ENCODE measurements at regions of chr12 and their contacts with region 1.

Region 1: DNA sequence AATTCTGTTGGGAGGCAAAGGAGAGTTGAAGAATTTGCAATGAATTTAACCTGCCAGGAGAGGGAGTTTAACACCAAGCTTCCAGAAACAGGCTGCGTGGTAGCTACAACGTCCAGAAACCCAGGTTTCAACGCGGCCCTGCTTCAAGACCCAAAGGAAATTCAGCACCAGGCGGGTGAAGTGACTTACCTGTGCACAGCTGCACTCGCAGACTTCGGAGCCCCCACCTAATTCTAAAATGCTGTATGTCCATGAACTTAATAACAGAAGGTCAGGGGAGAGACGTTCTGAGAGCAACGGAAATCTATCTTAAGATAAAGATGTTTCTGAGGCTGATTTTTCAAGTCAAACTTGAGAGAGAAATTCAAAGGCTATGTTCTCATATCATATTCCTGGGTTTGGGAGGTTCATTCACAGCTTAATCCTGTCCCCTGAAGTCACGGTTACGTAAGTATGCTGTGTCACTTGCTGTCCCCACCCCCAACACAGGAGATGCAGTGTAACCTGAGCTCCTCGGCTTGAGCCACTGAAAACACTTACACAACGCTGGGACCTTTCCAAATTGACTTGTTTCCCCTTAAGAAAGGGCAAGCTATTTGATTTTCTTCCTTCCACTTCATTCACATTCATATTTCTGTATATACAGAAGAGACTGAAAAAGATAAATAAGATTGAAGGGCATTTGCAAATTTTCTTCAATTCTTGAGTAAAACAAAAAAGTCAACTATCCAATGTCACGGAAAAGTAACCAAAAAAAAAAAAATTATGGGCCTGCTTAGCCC is 22.7 kb downstream of the CLIP1 start:
- DNase-seq: peak; percentile 75
- H3K4me3 ChIP-seq: peak overlapping the region; percentile 2 to 27 (median 18)
- H3K27ac ChIP-seq: peak overlapping the region; percentile 97
- H3K4me1 ChIP-seq: peaks cover 34% of the 10 kb centered on the region
- H3K27me3 ChIP-seq: no peaks in the 10 kb centered on the region
- CTCF ChIP-seq: peak; percentile 58 to 70

Region 2: GRCh38 chr12:122421821-122422729 is 22.3 kb after region 1 on chr12 and contains the start of gene CLIP1:
- CTCF ChIA-PET with region 1: no interaction called
- dilution Hi-C with region 1: no loop called
- in situ Hi-C with region 1: no loop called
- intact Hi-C with region 1: loop called (anchors 1 kb)
- DNase-seq: peak; percentile 68
- H3K4me3 ChIP-seq: peak within 1 kb of the TSS; percentile 70 to 79 (median 75)
- H3K27ac ChIP-seq: peak within 1 kb of the TSS; percentile 95
- H3K4me1 ChIP-seq: peaks cover 21% of the 10 kb centered on the region
- H3K27me3 ChIP-seq: no peaks in the 10 kb centered on the region
- CTCF ChIP-seq: peak in 1 of 2 donors; percentile 56
- total RNA-seq, gene CLIP1: 86.1 to 97.4 TPM

Region 3: GRCh38 chr12:122437656-122438121 is 37.9 kb after region 1 on chr12:
- CTCF ChIA-PET with region 1: no interaction called
- dilution Hi-C with region 1: loop called (anchors 5 kb)
- in situ Hi-C with region 1: no loop called
- intact Hi-C with region 1: no loop called
- DNase-seq: peak; percentile 74
- H3K4me3 ChIP-seq: peak overlapping the region in 1 of 3 experiments; percentile 3
- H3K27ac ChIP-seq: no peak overlapping the region
- H3K4me1 ChIP-seq: peaks cover 4% of the 10 kb centered on the region
- H3K27me3 ChIP-seq: no peaks in the 10 kb centered on the region
- CTCF ChIP-seq: no peak

Region 4: DNA sequence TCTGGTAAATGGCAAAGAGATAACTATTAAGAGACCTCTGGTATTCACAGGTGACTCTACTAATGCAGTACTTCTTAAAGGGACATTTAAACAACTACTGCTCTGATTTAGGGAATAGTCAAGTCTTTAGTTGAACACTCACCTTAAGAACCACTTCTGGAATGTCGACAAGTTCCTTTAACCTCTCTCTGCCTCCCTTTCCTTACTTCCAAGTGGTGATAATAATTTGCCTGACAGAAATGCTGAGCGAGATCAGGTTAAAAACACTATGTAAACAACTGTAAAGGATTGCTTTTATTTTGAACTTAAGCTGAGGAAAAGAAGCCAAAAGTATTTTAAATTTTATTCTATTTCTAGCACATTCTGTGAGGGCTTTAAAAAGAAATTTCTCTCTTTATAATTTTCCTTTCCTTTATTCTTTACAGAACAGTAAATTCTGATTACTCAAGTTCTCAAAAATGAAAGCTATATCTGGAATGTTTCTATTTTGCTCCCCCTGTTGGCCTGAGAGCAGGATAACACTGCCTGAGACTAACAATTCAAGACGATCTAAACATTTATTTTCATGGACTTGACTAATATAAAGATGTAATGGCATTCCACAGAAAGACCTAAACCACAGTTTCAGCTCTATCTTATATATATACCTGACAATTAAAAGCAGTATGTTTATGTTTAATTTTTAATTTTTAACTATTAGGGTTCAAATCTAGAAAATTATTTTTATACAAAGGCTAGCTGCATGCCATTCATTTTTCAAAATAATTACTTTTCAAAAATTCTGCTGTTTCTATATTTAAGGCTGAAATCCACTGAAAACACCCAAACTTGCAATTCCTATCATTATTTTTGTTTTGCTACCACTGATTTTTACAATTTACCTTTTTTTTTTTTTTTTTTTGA is 71.8 kb after region 1 on chr12:
- CTCF ChIA-PET with region 1: interaction called, 26 read pairs
- dilution Hi-C with region 1: loop called (anchors 5 kb)
- in situ Hi-C with region 1: loop called (anchors 5 to 10 kb)
- intact Hi-C with region 1: loop called (anchors 1 kb)
- DNase-seq: peak; percentile 58
- H3K4me3 ChIP-seq: no peak overlapping the region
- H3K27ac ChIP-seq: peak overlapping the region; percentile 55
- H3K4me1 ChIP-seq: peaks cover 15% of the 10 kb centered on the region
- H3K27me3 ChIP-seq: no peaks in the 10 kb centered on the region
- CTCF ChIP-seq: peak; percentile 74 to 79

Region 5: GRCh38 chr12:122500685-122501488 is 101.1 kb after region 1 on chr12 and contains the start of gene ZCCHC8:
- CTCF ChIA-PET with region 1: interaction called, 3 read pairs
- dilution Hi-C with region 1: no loop called
- in situ Hi-C with region 1: no loop called
- intact Hi-C with region 1: loop called (anchors 1 kb)
- DNase-seq: peak; percentile 98
- H3K4me3 ChIP-seq: peak within 1 kb of the TSS; percentile 80 to 100 (median 95)
- H3K27ac ChIP-seq: peak within 1 kb of the TSS; percentile 93
- H3K4me1 ChIP-seq: no peaks in the 10 kb centered on the region
- H3K27me3 ChIP-seq: no peaks in the 10 kb centered on the region
- CTCF ChIP-seq: peak in 1 of 2 donors; percentile 20
- total RNA-seq, gene ZCCHC8: 17.0 to 30.9 TPM

Measured in mammary epithelial cell (primary cell).